ENCODE measurements at regions of chr3 and their contacts with region 1.

Region 1: DNA sequence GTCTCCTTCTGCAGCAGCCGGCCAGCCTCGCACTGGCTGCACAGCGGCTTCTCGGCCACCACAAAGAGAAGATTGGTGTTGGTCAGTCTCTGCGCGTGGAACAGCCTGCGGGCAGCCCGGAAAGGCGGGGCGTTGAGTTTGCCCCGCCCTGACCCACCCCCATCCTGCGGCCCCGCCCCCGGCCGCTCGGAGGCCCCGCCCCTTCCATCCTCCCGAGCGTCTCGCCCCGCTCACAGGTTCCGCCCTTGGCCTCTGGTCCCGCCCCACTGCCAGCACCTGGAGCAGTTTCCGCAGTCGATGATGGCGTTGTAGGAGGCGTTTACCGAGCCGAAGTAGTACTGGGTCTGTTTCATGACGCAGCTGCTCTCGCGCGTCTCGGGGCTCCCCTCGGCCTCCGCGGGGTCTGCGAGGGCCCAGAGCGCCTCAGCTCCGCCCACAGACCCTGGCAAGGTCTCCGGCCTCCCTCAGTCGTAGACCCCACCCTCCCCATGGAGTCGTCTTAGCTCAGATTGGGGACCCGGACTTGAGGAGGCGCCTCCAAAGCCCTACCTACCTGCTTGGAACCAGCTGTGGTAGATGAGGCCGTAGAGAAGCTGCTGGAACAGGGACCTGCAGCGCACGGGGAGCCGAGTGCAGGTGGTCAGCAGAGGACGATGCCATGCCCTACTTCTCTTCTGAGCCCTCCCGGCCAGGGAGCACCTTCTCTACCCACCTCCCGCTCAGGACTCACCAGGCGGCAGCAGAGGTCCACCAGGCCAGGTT is 5.9 kb upstream of the TMEM115 start:
- DNase-seq: peak; percentile 93
- H3K4me3 Mint-ChIP-seq: peak overlapping the region; percentile 79
- H3K27ac Mint-ChIP-seq: peak overlapping the region; percentile 70
- H3K4me1 Mint-ChIP-seq: peaks cover 13% of the 10 kb centered on the region
- H3K27me3 Mint-ChIP-seq: peaks cover 4% of the 10 kb centered on the region

Region 2: DNA sequence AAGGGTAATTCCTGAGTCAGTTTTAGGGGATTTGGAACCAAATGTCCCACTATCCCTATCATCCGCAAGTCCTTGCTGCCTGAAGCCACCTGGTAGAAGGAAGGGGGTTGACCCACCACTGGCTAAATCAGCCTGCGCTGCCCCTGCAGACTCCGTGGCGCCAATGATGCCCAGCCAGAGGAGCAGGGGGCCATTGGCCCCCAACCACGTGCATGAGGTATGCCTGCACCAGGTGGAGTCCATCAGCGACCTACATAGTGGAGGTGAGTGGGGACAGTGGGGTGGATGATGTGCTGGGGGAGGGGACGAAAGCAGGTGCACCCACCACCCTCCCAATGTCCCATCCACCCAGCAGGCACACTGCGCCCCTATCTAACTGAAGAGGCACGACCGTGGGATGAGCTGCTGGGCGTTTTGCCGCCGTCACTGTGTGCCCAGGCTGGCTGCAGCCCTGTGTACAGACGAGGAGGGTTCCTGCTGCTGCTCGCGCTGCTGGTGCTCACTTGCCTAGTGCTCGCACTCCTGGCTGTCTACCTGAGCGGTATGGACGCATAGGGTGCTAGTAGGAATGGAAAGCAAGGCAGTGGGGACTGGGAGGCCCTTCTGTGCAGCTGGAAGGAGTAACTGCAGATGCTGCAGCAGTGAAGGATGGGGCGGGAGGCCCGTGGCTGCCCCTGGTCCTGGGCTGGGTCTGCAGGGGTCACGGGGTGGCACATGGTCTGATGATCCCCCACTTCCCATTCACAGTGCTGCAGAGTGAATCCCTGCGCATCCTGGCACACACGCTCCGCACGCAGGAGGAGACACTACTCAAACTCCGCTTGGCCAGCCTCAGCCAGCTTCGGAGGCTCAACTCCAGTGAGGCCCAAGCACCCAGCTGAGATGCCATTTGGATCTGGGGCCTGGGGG is 78.7 kb before region 1 on chr3:
- intact Hi-C with region 1: no loop called
- DNase-seq: no peak
- H3K4me3 Mint-ChIP-seq: no peak overlapping the region
- H3K27ac Mint-ChIP-seq: no peak overlapping the region
- H3K4me1 Mint-ChIP-seq: peaks cover 6% of the 10 kb centered on the region
- H3K27me3 Mint-ChIP-seq: no peaks in the 10 kb centered on the region

Region 3: DNA sequence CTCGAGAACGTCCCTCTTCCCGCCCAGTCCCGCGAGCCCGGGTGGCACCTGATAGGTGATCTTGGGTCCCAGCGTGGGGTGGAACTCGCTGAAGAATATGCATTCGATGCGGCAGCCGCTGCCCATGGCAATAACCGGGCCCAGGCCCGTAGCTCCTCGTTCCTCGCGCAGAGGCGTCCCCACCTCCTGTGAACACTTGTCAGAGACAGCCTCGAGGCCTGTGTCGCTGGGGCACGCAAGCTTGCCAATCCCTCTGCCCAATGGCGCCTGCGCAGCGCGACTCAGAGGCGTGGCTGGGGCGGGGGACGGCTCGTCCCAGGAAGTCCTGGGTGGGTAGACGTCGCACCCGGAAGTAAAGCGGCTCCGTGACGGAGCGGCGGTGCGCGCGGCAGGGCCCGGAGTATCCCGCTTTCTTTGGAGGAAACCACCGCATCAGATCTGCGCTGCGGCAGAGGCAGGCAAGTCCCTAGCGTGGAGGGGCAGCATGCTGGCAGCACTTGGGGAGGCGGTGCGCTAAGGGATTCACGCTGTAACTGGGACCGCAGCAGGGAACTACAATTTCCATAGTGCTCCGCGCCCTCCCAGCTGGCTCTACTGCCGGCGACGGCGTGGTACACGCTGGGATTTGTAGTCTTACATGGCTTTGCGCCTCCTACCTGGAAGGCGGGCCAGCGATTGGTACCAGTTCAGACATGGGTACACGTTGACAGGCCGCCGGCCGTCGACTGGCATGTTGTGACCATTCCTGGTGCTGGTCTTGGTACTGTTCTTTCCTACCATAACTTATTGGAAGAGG is 14.5 kb before region 1 on chr3 and contains the starts of genes CYB561D2 and NPRL2:
- intact Hi-C with region 1: loop called (anchors 2 kb)
- DNase-seq: peak; percentile 100
- H3K4me3 Mint-ChIP-seq: peak within 1 kb of the TSS; percentile 95
- H3K27ac Mint-ChIP-seq: peak within 1 kb of the TSS; percentile 95
- H3K4me1 Mint-ChIP-seq: peaks cover 55% of the 10 kb centered on the region
- H3K27me3 Mint-ChIP-seq: no peaks in the 10 kb centered on the region
- total RNA-seq, gene CYB561D2: 30.0 and 35.9 TPM in 2 replicates
- total RNA-seq, gene NPRL2: 43.7 and 46.6 TPM in 2 replicates

Region 4: DNA sequence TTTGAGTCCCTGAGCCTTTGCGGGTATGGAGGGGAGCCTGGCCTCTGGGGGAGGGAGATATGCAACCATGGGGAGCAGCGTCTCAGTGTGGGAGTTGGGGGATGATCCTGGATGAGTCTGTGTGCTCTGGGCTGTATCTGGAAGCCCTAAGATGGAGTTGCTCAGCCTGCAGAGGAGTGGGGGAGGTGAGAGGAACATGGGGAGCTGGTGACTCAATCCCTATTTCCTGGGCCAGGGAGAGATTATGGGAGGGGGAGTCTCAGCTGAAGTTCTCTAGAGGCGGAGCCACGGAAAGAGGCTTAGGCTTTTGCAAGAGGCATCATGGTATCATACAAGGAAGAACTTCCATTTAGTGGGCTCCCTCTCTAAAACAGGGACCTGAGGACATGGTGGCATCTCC is 53.6 kb after region 1 on chr3:
- intact Hi-C with region 1: no loop called
- DNase-seq: no peak
- H3K4me3 Mint-ChIP-seq: no peak overlapping the region
- H3K27ac Mint-ChIP-seq: no peak overlapping the region
- H3K4me1 Mint-ChIP-seq: no peaks in the 10 kb centered on the region
- H3K27me3 Mint-ChIP-seq: no peaks in the 10 kb centered on the region

Measured in activated T-helper 1 cell treated with anti-CD3 and anti-CD28 coated beads, Interleukin-12 subunit alpha, Interleukin-12 subunit beta, Interleukin-2, Interleukin-4 antibody, amounts not matched to agents 30 ng/mL and 10 ng/mL and 1 ng/mL, durations not matched to agents 14 hours and 24 hours and 36 hours (primary cell).